B cell (primary cell): ENCODE measurements at regions of chr12 and their contacts with region 1.

Region 1: GRCh38 chr12:58302485-58303011 is 361.2 kb downstream of the ATP23 start:
- DNase-seq: no peak
- ATAC-seq: no peak
- H3K4me3 ChIP-seq: no peak overlapping the region
- H3K4me3 Mint-ChIP-seq: no peak overlapping the region
- H3K27ac ChIP-seq: no peak overlapping the region
- H3K27ac Mint-ChIP-seq: no peak overlapping the region
- H3K4me1 ChIP-seq: no peaks in the 10 kb centered on the region
- H3K4me1 Mint-ChIP-seq: no peaks in the 10 kb centered on the region
- H3K27me3 ChIP-seq: no peaks in the 10 kb centered on the region
- H3K27me3 Mint-ChIP-seq: peaks cover 4% of the 10 kb centered on the region
- CTCF ChIP-seq: no peak

Region 2: GRCh38 chr12:58176296-58176869 is 126.2 kb before region 1 on chr12:
- CTCF ChIA-PET with region 1: no interaction called
- POLR2A ChIA-PET with region 1: no interaction called
- intact Hi-C with region 1: loop called (anchors 5 kb)
- DNase-seq: peak; percentile 35
- ATAC-seq: no peak
- H3K4me3 ChIP-seq: no peak overlapping the region
- H3K4me3 Mint-ChIP-seq: peak overlapping the region; percentile 13
- H3K27ac ChIP-seq: no peak overlapping the region
- H3K27ac Mint-ChIP-seq: no peak overlapping the region
- H3K4me1 ChIP-seq: no peaks in the 10 kb centered on the region
- H3K4me1 Mint-ChIP-seq: peaks cover 3% of the 10 kb centered on the region
- H3K27me3 ChIP-seq: peaks cover 0 to 6% (median 0%) of the 10 kb centered on the region in 4 experiments
- H3K27me3 Mint-ChIP-seq: peaks cover 45% of the 10 kb centered on the region
- CTCF ChIP-seq: peak; percentile 71

Region 3: DNA sequence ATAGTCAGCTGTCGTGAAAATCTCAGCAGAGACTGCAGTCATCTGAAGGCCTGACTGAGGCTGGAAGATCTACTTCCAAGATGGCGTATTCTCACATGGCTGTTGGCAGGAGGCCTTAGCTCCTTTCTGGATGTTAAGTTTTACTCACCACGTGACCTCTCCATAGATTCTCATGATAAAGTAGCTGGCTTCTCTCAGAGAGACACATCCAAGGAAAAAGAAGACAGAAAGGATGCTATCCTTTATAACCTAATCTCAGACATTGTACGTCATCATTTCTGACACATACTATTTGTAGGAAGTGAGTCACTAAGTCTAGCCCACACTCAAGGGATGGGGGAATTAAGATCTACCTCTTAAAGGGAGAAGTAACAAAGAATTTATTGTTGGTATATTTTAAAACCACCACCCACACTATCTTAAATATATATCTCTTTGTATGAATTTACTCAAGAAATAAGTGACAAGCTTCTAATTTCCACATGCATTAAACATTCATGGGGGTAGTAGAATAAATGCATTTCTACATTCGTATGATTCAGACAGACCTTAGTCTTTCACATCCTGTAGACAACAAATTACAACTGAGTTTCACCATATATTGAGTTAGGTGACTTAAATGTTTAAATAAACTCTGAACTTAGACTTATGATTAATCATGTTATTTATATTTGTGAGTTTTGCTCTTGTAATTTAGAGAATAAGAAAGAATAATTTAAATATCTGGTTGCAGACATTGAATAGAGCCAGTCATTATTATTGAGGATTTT is 206.8 kb after region 1 on chr12:
- CTCF ChIA-PET with region 1: no interaction called
- POLR2A ChIA-PET with region 1: no interaction called
- intact Hi-C with region 1: no loop called
- DNase-seq: no peak
- ATAC-seq: no peak
- H3K4me3 ChIP-seq: no peak overlapping the region
- H3K4me3 Mint-ChIP-seq: no peak overlapping the region
- H3K27ac ChIP-seq: no peak overlapping the region
- H3K27ac Mint-ChIP-seq: no peak overlapping the region
- H3K4me1 ChIP-seq: no peaks in the 10 kb centered on the region
- H3K4me1 Mint-ChIP-seq: no peaks in the 10 kb centered on the region
- H3K27me3 ChIP-seq: no peaks in the 10 kb centered on the region
- H3K27me3 Mint-ChIP-seq: no peaks in the 10 kb centered on the region
- CTCF ChIP-seq: no peak